Activated CD4-positive, alpha-beta T cell treated with anti-CD3 and anti-CD28 coated beads for 36 hours (primary cell): ENCODE measurements at regions of chr9 and their contacts with region 1.

Region 1: DNA sequence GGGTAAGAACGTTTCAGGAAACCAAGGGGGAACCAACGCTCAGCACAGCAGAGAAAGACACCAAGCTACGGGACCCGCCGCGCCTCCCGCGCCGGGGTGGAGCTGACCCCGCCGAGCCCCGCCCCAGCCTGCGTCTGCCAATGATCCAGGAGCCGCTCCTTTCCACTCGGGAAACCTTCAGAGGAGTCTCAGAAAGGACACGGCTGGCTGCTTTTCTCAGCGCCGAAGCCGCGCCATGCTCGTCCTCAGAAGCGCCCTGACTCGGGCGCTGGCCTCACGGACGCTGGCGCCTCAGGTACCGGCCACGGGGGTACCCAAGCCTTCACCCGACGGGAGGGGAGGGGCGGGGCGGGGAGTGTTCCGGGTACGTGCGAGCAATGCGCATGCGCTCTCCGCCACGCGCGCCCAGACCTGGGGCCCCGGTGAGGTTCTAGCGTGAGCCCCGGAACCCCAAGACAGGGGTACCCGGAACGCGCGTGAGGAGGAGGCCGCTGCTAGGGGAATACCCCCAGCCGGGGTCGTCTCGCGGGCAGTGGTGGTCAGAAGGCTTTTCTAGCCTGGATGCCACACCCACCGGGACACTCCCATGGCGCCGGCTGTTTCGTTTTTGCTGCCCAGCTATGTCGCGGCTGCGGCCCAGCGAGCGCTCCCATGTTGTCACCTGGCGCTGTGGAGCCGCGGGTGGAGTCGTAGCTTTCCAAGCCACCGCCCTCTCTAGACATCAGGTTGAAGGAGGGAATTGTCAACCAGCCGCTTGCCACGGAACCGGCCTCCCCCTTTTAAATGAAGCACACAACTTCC is at the start of gene NIPSNAP3A:
- DNase-seq: peak; percentile 92
- ATAC-seq: peak; percentile 93
- H3K4me3 Mint-ChIP-seq: peak within 1 kb of the TSS; percentile 85
- H3K27ac Mint-ChIP-seq: peak within 1 kb of the TSS; percentile 96
- H3K4me1 Mint-ChIP-seq: peaks cover 16% of the 10 kb centered on the region
- H3K27me3 Mint-ChIP-seq: no peaks in the 10 kb centered on the region
- total RNA-seq, gene NIPSNAP3A: 7.2 to 11.7 TPM

Region 2: DNA sequence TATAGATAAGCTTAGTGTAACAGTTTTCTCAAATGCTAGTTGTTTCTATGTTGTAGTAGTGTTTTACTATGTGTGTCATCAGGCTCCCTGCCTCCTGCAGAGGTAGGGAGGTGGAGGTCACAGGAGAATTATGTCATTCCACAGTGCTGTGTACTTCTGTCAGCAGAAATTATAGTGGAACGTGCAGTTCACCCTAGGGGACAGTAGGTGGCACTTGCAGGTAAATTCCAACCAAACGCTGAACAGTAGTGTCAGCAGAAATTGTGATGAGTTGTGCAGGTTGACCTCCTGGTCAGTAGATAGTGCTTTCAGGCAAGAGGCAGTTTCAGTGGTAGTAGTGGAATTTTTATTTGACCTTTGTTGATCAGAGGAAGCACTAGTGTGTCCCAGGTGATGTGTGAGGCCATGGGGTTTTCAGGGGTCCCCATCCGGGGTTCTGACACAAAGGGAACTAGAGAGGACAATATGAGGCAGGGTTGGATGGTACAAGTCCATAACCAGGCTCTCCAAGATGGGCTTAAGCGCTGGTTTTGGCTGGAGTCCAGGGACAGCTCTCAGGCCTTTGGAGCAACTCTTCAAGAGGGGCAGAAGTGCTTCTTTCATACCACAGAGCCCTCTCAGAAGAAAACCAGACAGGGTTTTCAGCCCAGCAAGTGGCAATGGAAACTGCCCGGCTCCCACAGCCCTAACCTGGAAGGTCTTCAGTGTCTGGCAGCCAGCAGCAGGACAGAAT is 1349.7 kb before region 1 on chr9:
- CTCF ChIA-PET with region 1: interaction called, 3 read pairs
- POLR2A ChIA-PET with region 1: no interaction called
- intact Hi-C with region 1: loop called in 1 of 2 experiments (anchors 2 kb)
- DNase-seq: peak; percentile 48
- ATAC-seq: peak; percentile 69
- H3K4me3 Mint-ChIP-seq: no peak overlapping the region
- H3K27ac Mint-ChIP-seq: no peak overlapping the region
- H3K4me1 Mint-ChIP-seq: no peaks in the 10 kb centered on the region
- H3K27me3 Mint-ChIP-seq: no peaks in the 10 kb centered on the region

Region 3: DNA sequence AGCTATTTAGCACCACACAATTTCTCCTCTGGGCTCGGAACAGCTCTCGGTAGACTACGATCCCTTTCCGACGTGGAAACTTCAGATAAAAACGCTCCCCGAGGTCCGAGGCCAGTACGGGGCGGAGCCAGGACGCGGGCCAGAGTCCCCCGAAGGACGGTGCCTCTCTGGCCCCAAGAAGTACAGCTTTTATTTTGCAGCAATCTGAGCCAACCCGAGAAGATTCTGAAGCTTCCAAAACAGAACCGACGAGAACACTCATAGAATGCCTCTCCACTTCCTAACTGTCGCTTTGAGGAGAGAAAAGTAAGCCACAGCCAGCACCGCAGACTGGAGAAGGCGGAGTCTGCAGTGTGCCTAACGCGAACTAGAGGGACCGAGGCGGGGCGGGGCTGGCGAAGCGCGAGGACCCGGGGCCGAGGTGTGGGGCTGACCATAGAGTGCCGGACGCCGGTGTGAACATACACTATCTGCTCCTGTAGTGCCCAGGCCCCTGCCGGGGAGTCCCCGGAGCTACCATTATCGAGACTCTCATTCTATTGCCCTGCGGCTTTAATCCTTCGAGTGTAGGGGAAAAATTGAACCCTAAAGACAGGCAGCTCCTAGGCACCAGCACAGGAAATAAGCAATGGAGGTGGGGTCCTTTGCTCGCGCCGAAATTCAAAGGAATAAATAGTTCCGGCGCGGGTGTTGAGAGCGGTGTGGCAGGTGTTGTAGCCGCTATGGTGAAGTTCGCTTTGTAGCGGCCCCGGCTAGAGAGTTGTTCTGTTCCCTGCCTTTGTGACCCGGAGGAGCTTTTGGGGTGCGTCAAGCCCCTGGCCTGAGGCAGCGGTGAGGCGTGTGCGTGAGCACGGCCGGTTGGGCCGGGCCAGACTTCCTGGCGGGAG is 653.9 kb before region 1 on chr9 and contains the start of gene SMC2:
- CTCF ChIA-PET with region 1: no interaction called
- POLR2A ChIA-PET with region 1: no interaction called
- intact Hi-C with region 1: loop called (anchors 1 to 5 kb)
- DNase-seq: peak; percentile 96
- ATAC-seq: peak; percentile 91
- H3K4me3 Mint-ChIP-seq: peak within 1 kb of the TSS; percentile 88
- H3K27ac Mint-ChIP-seq: peak within 1 kb of the TSS; percentile 99
- H3K4me1 Mint-ChIP-seq: peaks cover 37% of the 10 kb centered on the region
- H3K27me3 Mint-ChIP-seq: no peaks in the 10 kb centered on the region
- total RNA-seq, gene SMC2: 78.4 to 84.5 TPM

Region 4: DNA sequence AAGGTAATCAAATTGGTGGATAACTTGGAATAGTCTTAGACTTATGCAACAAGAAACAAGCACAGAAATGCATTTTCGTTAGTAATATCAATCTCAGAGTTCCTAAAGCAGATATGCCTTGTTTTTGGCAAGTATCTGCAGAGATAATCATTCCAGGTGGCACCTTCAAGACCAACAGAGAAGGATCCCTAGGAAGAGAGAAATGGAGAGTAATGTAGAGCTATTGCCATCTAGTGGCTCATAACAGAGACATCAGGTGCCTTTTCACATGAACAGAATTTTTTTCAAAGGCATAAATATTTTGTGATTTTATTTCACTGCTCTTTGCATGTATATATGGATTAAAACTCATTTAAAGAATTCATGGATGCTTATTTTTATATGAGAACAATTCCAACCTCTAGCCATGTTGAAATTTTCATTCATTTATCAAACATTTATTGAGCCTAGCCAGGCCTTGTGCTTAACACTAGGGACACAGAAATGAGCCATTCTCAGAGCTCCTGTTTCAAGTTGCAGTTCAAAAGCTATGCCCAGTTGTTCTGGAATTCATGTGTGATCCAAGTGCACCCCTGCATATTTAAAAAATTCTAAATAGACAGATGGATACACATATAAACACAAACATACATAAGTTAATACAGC is 361.2 kb before region 1 on chr9:
- CTCF ChIA-PET with region 1: no interaction called
- POLR2A ChIA-PET with region 1: no interaction called
- intact Hi-C with region 1: loop called in 1 of 2 experiments (anchors 10 kb)
- DNase-seq: no peak
- ATAC-seq: no peak
- H3K4me3 Mint-ChIP-seq: no peak overlapping the region
- H3K27ac Mint-ChIP-seq: no peak overlapping the region
- H3K4me1 Mint-ChIP-seq: no peaks in the 10 kb centered on the region
- H3K27me3 Mint-ChIP-seq: peaks cover 4% of the 10 kb centered on the region

Region 5: GRCh38 chr9:104682642-104683041 is 65.1 kb before region 1 on chr9:
- CTCF ChIA-PET with region 1: no interaction called
- POLR2A ChIA-PET with region 1: no interaction called
- intact Hi-C with region 1: loop called in 1 of 2 experiments (anchors 5 kb)
- DNase-seq: no peak
- ATAC-seq: peak; percentile 53
- H3K4me3 Mint-ChIP-seq: no peak overlapping the region
- H3K27ac Mint-ChIP-seq: no peak overlapping the region
- H3K4me1 Mint-ChIP-seq: no peaks in the 10 kb centered on the region
- H3K27me3 Mint-ChIP-seq: no peaks in the 10 kb centered on the region

Region 6: GRCh38 chr9:104968025-104968982 is 220.5 kb after region 1 on chr9:
- CTCF ChIA-PET with region 1: no interaction called
- POLR2A ChIA-PET with region 1: no interaction called
- intact Hi-C with region 1: loop called in 1 of 2 experiments (anchors 1 kb)
- DNase-seq: peak; percentile 94
- ATAC-seq: peak; percentile 99
- H3K4me3 Mint-ChIP-seq: peak overlapping the region; percentile 86
- H3K27ac Mint-ChIP-seq: peak overlapping the region; percentile 92
- H3K4me1 Mint-ChIP-seq: peaks cover 13% of the 10 kb centered on the region
- H3K27me3 Mint-ChIP-seq: peaks cover 9% of the 10 kb centered on the region

Region 7: GRCh38 chr9:105557771-105558610 is 810.2 kb after region 1 on chr9 and contains the start of gene FKTN:
- CTCF ChIA-PET with region 1: no interaction called
- POLR2A ChIA-PET with region 1: no interaction called
- intact Hi-C with region 1: loop called in 1 of 2 experiments (anchors 10 kb)
- DNase-seq: peak; percentile 91
- ATAC-seq: peak; percentile 97
- H3K4me3 Mint-ChIP-seq: peak within 1 kb of the TSS; percentile 94
- H3K27ac Mint-ChIP-seq: peak within 1 kb of the TSS; percentile 85
- H3K4me1 Mint-ChIP-seq: peaks cover 18% of the 10 kb centered on the region
- H3K27me3 Mint-ChIP-seq: no peaks in the 10 kb centered on the region
- total RNA-seq, gene FKTN: 12.1 to 16.0 TPM